ENCODE measurements at regions of chr21 and their contacts with region 1.

Region 1: DNA sequence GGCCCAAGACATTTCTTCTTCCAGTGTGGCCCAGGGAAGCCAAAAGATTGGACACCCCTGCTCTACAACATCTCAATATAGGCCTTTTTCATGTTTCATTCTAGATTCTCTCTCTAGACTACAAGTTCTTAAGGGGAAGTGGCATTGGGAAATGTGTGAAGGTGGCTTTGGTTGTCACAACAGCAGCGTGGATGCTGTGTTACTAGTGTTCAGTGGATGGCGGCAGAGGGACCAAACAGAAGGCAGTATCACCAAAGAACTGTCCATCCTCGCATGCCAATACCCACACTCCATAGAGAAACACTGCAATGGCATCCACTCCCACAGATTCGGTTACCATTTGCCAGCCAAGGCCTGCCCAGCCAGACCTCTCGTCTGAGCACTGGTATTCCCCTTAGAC is 24.3 kb upstream of the IFNAR2 start:
- DNase-seq: no peak
- H3K4me3 ChIP-seq: no peak overlapping the region
- H3K27ac ChIP-seq: no peak overlapping the region
- H3K4me1 ChIP-seq: peaks cover 2 to 6% of the 10 kb centered on the region in 2 donors
- H3K27me3 ChIP-seq: no peaks in the 10 kb centered on the region
- CTCF ChIP-seq: no peak

Region 2: GRCh38 chr21:33229784-33230544 is 24.5 kb after region 1 on chr21 and contains the start of gene IFNAR2:
- intact Hi-C with region 1: loop called (anchors 2 kb)
- DNase-seq: peak in 1 of 2 donors; percentile 86
- H3K4me3 ChIP-seq: peak within 1 kb of the TSS; percentile 95 to 100
- H3K27ac ChIP-seq: peak within 1 kb of the TSS; percentile 99
- H3K4me1 ChIP-seq: peaks cover 0 to 23% of the 10 kb centered on the region in 2 donors
- H3K27me3 ChIP-seq: no peaks in the 10 kb centered on the region
- CTCF ChIP-seq: no peak
- total RNA-seq, gene IFNAR2: 30.3 TPM